ENCODE measurements at regions of chr15 and their contacts with region 1.

Region 1: GRCh38 chr15:36883713-36884517 is 216.4 kb downstream of the MEIS2 start:
- DNase-seq: peak; percentile 96
- H3K4me3 ChIP-seq: peak overlapping the region; percentile 26 to 47 (median 34)
- H3K27ac ChIP-seq: peak overlapping the region; percentile 56 to 84 (median 78)
- H3K4me1 ChIP-seq: peaks cover 0 to 45% (median 35%) of the 10 kb centered on the region in 4 donors
- H3K27me3 ChIP-seq: peaks cover 0 to 9% (median 0%) of the 10 kb centered on the region in 3 donors
- CTCF ChIP-seq: peak; percentile 85 to 88 (median 88)
- EP300 ChIP-seq: no peak
- POLR2A ChIP-seq: no peak

Region 2: GRCh38 chr15:35301088-35301487 is 1582.8 kb before region 1 on chr15:
- intact Hi-C with region 1: loop called (anchors 5 kb)
- DNase-seq: no peak
- H3K4me3 ChIP-seq: no peak overlapping the region
- H3K27ac ChIP-seq: no peak overlapping the region
- H3K4me1 ChIP-seq: peaks cover 0 to 20% (median 16%) of the 10 kb centered on the region in 4 donors
- H3K27me3 ChIP-seq: no peaks in the 10 kb centered on the region
- CTCF ChIP-seq: no peak
- EP300 ChIP-seq: no peak
- POLR2A ChIP-seq: no peak

Region 3: DNA sequence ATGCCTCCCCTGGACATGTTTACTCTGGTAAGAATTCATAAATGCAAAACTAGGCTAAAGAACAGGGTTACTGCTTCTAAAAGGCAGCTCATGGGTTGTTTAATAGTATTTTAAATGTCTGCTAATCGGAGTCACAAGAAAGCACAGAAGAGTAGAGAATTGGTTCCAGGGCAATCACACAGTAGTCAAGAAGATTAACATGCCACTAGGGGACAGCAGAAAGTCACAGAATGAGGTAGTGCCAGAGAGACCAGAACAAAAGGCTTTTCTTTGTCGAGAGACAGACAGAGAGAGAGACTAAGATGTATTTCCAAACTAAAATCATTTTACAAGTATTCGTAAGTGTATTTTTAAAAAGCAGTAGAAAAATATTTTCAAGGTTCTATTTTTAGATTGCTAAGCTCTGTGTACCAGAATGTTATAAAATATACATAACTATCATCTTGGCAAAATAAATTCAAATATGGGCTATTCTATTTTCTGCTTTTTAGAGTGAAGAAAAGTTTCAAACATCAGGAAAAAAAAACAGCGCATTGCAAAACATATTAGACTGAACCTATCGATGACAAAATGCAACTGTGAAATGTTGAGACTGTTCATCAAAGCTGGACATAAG is 382.7 kb before region 1 on chr15:
- intact Hi-C with region 1: loop called (anchors 5 kb)
- DNase-seq: no peak
- H3K4me3 ChIP-seq: no peak overlapping the region
- H3K27ac ChIP-seq: peak overlapping the region in 1 of 4 donors; percentile 30
- H3K4me1 ChIP-seq: peaks cover 0 to 41% (median 16%) of the 10 kb centered on the region in 4 donors
- H3K27me3 ChIP-seq: no peaks in the 10 kb centered on the region
- CTCF ChIP-seq: peak; percentile 49 to 79 (median 65)
- EP300 ChIP-seq: no peak
- POLR2A ChIP-seq: no peak

Region 4: GRCh38 chr15:37015035-37015434 is 131.1 kb after region 1 on chr15:
- intact Hi-C with region 1: loop called (anchors 2 kb)
- DNase-seq: no peak
- H3K4me3 ChIP-seq: no peak overlapping the region
- H3K27ac ChIP-seq: peak overlapping the region; percentile 72 to 83 (median 81)
- H3K4me1 ChIP-seq: peaks cover 0 to 69% (median 51%) of the 10 kb centered on the region in 4 donors
- H3K27me3 ChIP-seq: no peaks in the 10 kb centered on the region
- CTCF ChIP-seq: no peak
- EP300 ChIP-seq: no peak
- POLR2A ChIP-seq: no peak

Region 5: GRCh38 chr15:37106490-37107001 is 222.6 kb after region 1 on chr15:
- intact Hi-C with region 1: loop called (anchors 2 kb)
- DNase-seq: peak; percentile 85
- H3K4me3 ChIP-seq: peak overlapping the region; percentile 21 to 87 (median 61)
- H3K27ac ChIP-seq: peak overlapping the region; percentile 95 to 97 (median 96)
- H3K4me1 ChIP-seq: peaks cover 0 to 10% (median 3%) of the 10 kb centered on the region in 4 donors
- H3K27me3 ChIP-seq: no peaks in the 10 kb centered on the region
- CTCF ChIP-seq: peak in 1 of 4 experiments; percentile 8
- EP300 ChIP-seq: no peak
- POLR2A ChIP-seq: no peak

Region 6: GRCh38 chr15:37880009-37880834 is 996.3 kb after region 1 on chr15:
- intact Hi-C with region 1: loop called (anchors 10 kb)
- DNase-seq: no peak
- H3K4me3 ChIP-seq: no peak overlapping the region
- H3K27ac ChIP-seq: peak overlapping the region in 2 of 4 donors; percentile 48 to 66
- H3K4me1 ChIP-seq: peaks cover 0 to 32% (median 24%) of the 10 kb centered on the region in 4 donors
- H3K27me3 ChIP-seq: no peaks in the 10 kb centered on the region
- CTCF ChIP-seq: peak; percentile 32 to 77 (median 63)
- EP300 ChIP-seq: no peak
- POLR2A ChIP-seq: no peak

Measured in sigmoid colon (tissue), 7 donors.